Activated CD4-positive, alpha-beta T cell treated with anti-CD3 and anti-CD28 coated beads for 36 hours (primary cell): ENCODE measurements at regions of chr17 and their contacts with region 1.

Region 1: DNA sequence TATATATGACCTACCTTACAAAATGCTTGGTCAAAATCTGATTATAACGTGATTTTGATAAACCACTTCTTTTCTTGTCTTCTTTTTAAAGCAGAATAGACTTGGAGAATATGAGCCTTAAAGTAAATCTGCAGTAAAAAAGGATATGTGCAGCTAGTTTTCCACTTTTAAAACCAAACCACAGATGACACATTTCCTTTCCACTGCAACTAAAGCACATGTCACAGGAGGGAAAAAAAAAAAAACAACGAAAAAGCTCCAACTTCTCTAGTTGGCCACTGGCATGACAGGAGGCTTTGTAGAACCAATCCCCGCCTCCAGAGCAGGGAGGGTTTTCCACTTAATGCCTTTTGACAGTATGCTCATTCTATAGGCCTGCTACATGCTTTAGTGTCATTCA is at the start of gene EVI2A:
- DNase-seq: peak; percentile 86
- ATAC-seq: peak; percentile 88
- H3K4me3 Mint-ChIP-seq: peak within 1 kb of the TSS; percentile 72
- H3K27ac Mint-ChIP-seq: peak within 1 kb of the TSS; percentile 95
- H3K4me1 Mint-ChIP-seq: peaks cover 32% of the 10 kb centered on the region
- H3K27me3 Mint-ChIP-seq: no peaks in the 10 kb centered on the region
- total RNA-seq, gene EVI2A: 16.9 to 18.2 TPM

Region 2: DNA sequence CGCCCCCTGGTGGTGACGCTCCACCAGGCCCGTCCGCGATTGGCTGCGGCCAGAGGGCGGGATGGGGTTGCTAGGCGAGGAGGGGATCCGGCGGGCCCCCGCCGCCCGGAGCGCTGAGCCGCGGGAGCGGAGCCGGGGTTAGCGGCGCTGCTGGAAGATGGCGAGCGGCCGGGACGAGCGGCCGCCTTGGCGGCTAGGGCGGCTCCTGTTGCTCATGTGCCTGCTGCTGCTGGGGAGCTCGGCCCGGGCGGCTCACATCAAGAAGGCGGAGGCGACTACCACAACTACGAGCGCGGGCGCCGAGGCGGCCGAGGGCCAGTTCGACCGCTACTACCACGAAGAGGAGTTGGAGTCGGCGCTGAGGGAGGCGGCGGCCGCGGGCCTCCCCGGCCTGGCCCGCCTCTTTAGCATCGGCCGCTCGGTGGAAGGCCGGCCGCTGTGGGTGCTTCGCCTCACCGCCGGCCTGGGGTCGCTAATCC is 942.6 kb before region 1 on chr17 and contains the start of gene CPD:
- CTCF ChIA-PET with region 1: no interaction called
- POLR2A ChIA-PET with region 1: no interaction called
- intact Hi-C with region 1: loop called in 1 of 2 experiments (anchors 10 kb)
- DNase-seq: peak; percentile 98
- ATAC-seq: peak; percentile 87
- H3K4me3 Mint-ChIP-seq: peak within 1 kb of the TSS; percentile 82
- H3K27ac Mint-ChIP-seq: peak within 1 kb of the TSS; percentile 80
- H3K4me1 Mint-ChIP-seq: peaks cover 63% of the 10 kb centered on the region
- H3K27me3 Mint-ChIP-seq: no peaks in the 10 kb centered on the region
- total RNA-seq, gene CPD: 29.0 to 36.3 TPM

Region 3: GRCh38 chr17:31269578-31269983 is 51.9 kb before region 1 on chr17:
- CTCF ChIA-PET with region 1: no interaction called
- POLR2A ChIA-PET with region 1: no interaction called
- intact Hi-C with region 1: no loop called
- DNase-seq: no peak
- ATAC-seq: no peak
- H3K4me3 Mint-ChIP-seq: no peak overlapping the region
- H3K27ac Mint-ChIP-seq: no peak overlapping the region
- H3K4me1 Mint-ChIP-seq: no peaks in the 10 kb centered on the region
- H3K27me3 Mint-ChIP-seq: no peaks in the 10 kb centered on the region

Region 4: GRCh38 chr17:31308372-31309334 is 12.8 kb before region 1 on chr17:
- CTCF ChIA-PET with region 1: interaction called, 15 read pairs
- POLR2A ChIA-PET with region 1: interaction called, 4 read pairs
- intact Hi-C with region 1: loop called (anchors 1 kb)
- DNase-seq: no peak
- ATAC-seq: peak; percentile 63
- H3K4me3 Mint-ChIP-seq: peak overlapping the region; percentile 79
- H3K27ac Mint-ChIP-seq: peak overlapping the region; percentile 96
- H3K4me1 Mint-ChIP-seq: peaks cover 60% of the 10 kb centered on the region
- H3K27me3 Mint-ChIP-seq: no peaks in the 10 kb centered on the region

Region 5: GRCh38 chr17:31487648-31488263 is 166.3 kb after region 1 on chr17:
- CTCF ChIA-PET with region 1: no interaction called
- POLR2A ChIA-PET with region 1: no interaction called
- intact Hi-C with region 1: loop called (anchors 2 to 5 kb)
- DNase-seq: peak; percentile 95
- ATAC-seq: peak; percentile 92
- H3K4me3 Mint-ChIP-seq: peak overlapping the region; percentile 84
- H3K27ac Mint-ChIP-seq: peak overlapping the region; percentile 82
- H3K4me1 Mint-ChIP-seq: peaks cover 48% of the 10 kb centered on the region
- H3K27me3 Mint-ChIP-seq: no peaks in the 10 kb centered on the region

Region 6: DNA sequence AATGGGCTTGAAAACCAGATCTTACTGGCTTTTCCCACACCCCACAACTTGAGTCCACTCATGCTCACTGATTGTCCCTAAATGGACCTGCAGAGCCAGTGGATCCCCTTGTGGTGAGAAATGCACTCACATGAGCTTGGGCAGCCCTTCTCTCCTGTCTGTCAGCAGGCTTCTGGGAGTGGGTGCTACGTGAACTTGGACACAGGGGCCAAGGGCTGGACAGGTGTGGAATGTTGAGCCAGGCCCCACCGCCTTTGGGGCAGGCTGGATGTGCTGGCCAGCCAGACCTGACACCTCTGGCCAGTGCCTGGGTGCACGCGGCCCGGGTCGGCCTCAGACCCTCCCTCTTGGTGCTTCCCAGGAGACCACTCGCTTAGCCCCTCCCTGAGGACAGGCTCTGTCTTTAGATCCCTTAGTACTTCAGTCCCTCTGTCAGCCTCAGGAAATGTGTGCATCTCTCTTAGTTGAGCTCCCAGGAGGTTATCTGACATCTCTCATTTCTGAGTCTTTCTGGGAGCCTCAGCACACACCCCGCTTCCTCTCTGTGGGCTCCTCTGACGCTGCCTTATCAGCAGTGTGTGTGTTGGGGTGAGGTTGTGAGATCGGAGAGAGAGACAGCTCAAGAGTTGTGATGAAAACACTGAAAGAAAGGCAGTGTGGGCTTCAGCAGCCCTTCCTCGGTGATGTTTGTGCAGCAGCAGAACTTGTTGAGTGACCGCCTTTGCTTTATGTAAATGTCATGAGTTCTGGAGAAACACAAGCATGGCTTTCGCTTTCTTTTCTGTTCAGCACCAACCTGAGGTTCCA is 187.0 kb after region 1 on chr17:
- CTCF ChIA-PET with region 1: interaction called, 4 read pairs
- POLR2A ChIA-PET with region 1: interaction called, 3 read pairs
- intact Hi-C with region 1: loop called in 1 of 2 experiments (anchors 5 kb)
- DNase-seq: peak; percentile 79
- ATAC-seq: peak; percentile 85
- H3K4me3 Mint-ChIP-seq: peak overlapping the region; percentile 84
- H3K27ac Mint-ChIP-seq: peak overlapping the region; percentile 100
- H3K4me1 Mint-ChIP-seq: peaks cover 52% of the 10 kb centered on the region
- H3K27me3 Mint-ChIP-seq: no peaks in the 10 kb centered on the region

Region 7: DNA sequence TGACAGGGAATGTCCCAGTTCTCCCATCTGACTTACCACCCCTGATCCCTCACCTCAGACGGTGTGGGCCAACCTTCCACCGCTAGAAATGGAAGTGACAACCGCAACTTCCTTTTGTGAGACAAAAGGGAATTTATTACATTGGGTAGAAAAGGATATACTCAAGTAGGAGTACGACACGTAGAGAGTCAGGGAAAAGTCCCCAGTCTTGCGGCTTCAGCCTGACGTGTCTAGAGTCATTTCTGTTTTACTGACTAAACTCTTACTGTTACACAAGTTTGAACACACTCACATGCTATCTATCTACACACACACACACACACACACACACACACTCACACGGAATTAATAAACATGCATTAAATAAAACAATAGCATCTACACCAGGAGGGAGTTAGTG is 358.6 kb after region 1 on chr17:
- CTCF ChIA-PET with region 1: no interaction called
- POLR2A ChIA-PET with region 1: no interaction called
- intact Hi-C with region 1: loop called in 1 of 2 experiments (anchors 1 kb)
- DNase-seq: peak; percentile 80
- ATAC-seq: peak; percentile 93
- H3K4me3 Mint-ChIP-seq: peak overlapping the region; percentile 5
- H3K27ac Mint-ChIP-seq: peak overlapping the region; percentile 27
- H3K4me1 Mint-ChIP-seq: peaks cover 15% of the 10 kb centered on the region
- H3K27me3 Mint-ChIP-seq: peaks cover 41% of the 10 kb centered on the region

Region 8: DNA sequence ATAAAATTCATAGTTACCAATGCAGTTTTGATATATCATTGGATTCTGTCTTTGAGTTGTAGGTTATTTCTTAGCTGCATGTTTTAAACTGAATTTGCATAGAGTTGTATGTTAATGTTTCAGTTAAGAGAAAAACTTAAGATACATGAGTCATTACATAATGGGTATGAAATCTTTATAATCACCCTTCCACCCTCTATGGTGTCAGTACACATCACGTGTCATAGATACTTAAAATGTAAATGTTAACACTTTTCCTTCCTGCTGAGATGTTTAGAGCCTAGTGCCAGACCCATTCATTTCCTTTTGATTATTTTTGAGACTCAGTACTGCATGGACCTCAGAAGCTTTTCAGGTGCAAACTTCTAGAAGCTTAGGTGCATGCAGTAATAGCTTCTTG is 1048.9 kb after region 1 on chr17:
- CTCF ChIA-PET with region 1: no interaction called
- POLR2A ChIA-PET with region 1: no interaction called
- intact Hi-C with region 1: no loop called
- DNase-seq: no peak
- ATAC-seq: peak; percentile 64
- H3K4me3 Mint-ChIP-seq: no peak overlapping the region
- H3K27ac Mint-ChIP-seq: no peak overlapping the region
- H3K4me1 Mint-ChIP-seq: peaks cover 27% of the 10 kb centered on the region
- H3K27me3 Mint-ChIP-seq: no peaks in the 10 kb centered on the region